Activated CD4-positive, alpha-beta memory T cell treated with anti-CD3 and anti-CD28 coated beads, Interleukin-2, amount 10 ng/mL, durations not matched to agents 7 days and 5 days (primary cell): ENCODE measurements at regions of chr11 and their contacts with region 1.

Region 1: GRCh38 chr11:62591448-62592145 is at the start of gene TUT1:
- DNase-seq: peak; percentile 98
- H3K4me3 Mint-ChIP-seq: peak within 1 kb of the TSS; percentile 99
- H3K27ac Mint-ChIP-seq: peak within 1 kb of the TSS; percentile 96
- H3K4me1 Mint-ChIP-seq: peaks cover 65% of the 10 kb centered on the region
- H3K27me3 Mint-ChIP-seq: no peaks in the 10 kb centered on the region
- total RNA-seq, gene TUT1: 23.7 to 25.2 TPM

Region 2: GRCh38 chr11:62394825-62395538 is 196.6 kb before region 1 on chr11:
- CTCF ChIA-PET with region 1: interaction called, 16 read pairs
- POLR2A ChIA-PET with region 1: interaction called, 4 read pairs
- DNase-seq: peak; percentile 56
- H3K4me3 Mint-ChIP-seq: no peak overlapping the region
- H3K27ac Mint-ChIP-seq: no peak overlapping the region
- H3K4me1 Mint-ChIP-seq: peaks cover 4% of the 10 kb centered on the region
- H3K27me3 Mint-ChIP-seq: peaks cover 15% of the 10 kb centered on the region

Region 3: GRCh38 chr11:62556108-62556871 is 35.3 kb before region 1 on chr11:
- CTCF ChIA-PET with region 1: interaction called, 16 read pairs
- POLR2A ChIA-PET with region 1: interaction called, 57 read pairs
- DNase-seq: peak; percentile 94
- H3K4me3 Mint-ChIP-seq: peak overlapping the region; percentile 74
- H3K27ac Mint-ChIP-seq: peak overlapping the region; percentile 99
- H3K4me1 Mint-ChIP-seq: peaks cover 99% of the 10 kb centered on the region
- H3K27me3 Mint-ChIP-seq: no peaks in the 10 kb centered on the region

Region 4: DNA sequence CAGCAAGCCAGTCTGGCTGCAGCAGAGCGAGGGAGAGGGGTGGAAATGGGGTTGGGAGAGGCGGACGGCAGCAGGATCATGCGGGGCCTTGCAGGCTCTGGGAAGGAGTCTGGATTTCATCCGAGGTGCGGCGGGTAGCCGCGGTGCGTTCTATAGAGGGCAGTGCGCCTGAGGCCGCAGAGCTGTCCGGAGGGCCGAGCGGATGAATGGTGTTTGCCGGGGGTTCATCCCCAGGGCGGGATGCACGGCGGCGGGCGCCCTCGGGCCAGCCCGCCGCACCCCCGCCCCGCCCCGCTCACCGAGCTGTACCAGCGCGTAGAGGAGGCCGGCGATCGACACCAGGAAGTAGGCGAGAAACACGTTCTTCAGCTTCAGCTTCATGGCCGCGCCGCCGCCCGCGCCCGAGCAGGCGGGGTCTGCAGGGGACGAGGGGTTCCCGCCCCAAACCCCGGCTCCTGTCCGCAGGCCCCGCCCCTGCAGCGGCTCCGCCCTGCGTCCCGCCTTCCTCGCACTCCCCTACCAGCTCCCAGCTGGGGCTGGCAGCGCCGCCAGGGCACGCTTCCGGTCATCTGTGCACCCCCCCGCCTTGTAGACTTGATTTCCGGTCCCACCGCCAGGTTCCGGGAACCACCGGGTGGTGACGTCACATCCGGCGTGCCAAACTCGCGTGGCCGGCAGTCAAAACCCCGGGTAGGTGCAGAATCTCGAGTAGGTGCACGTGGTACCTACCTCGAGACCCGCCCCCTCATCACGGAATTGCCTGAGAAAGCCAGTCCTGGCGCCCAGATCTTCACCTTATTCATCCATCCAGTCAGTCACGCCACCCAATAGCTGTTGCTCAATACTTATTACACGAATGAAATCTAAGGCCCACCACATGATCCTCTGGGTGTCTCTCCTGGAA is 30.2 kb after region 1 on chr11 and contains the start of gene B3GAT3:
- CTCF ChIA-PET with region 1: interaction called, 14 read pairs
- POLR2A ChIA-PET with region 1: interaction called, 70 read pairs
- DNase-seq: peak; percentile 97
- H3K4me3 Mint-ChIP-seq: peak within 1 kb of the TSS; percentile 87
- H3K27ac Mint-ChIP-seq: peak within 1 kb of the TSS; percentile 98
- H3K4me1 Mint-ChIP-seq: peaks cover 29% of the 10 kb centered on the region
- H3K27me3 Mint-ChIP-seq: no peaks in the 10 kb centered on the region
- total RNA-seq, gene B3GAT3: 58.9 to 67.1 TPM

Region 5: GRCh38 chr11:62671575-62672389 is 80.2 kb after region 1 on chr11 and contains the starts of genes LBHD1 and UQCC3:
- CTCF ChIA-PET with region 1: interaction called, 6 read pairs
- POLR2A ChIA-PET with region 1: interaction called, 30 read pairs
- DNase-seq: peak; percentile 91
- H3K4me3 Mint-ChIP-seq: peak within 1 kb of the TSS; percentile 91
- H3K27ac Mint-ChIP-seq: peak within 1 kb of the TSS; percentile 91
- H3K4me1 Mint-ChIP-seq: peaks cover 68% of the 10 kb centered on the region
- H3K27me3 Mint-ChIP-seq: no peaks in the 10 kb centered on the region
- total RNA-seq, gene LBHD1: 17.2 to 18.3 TPM
- total RNA-seq, gene UQCC3: 7.9 to 8.2 TPM

Region 6: GRCh38 chr11:62726915-62727763 is 135.5 kb after region 1 on chr11 and contains the start of gene HNRNPUL2:
- CTCF ChIA-PET with region 1: interaction called, 13 read pairs
- POLR2A ChIA-PET with region 1: interaction called, 42 read pairs
- DNase-seq: peak; percentile 99
- H3K4me3 Mint-ChIP-seq: peak within 1 kb of the TSS; percentile 87
- H3K27ac Mint-ChIP-seq: peak within 1 kb of the TSS; percentile 97
- H3K4me1 Mint-ChIP-seq: peaks cover 50% of the 10 kb centered on the region
- H3K27me3 Mint-ChIP-seq: no peaks in the 10 kb centered on the region
- total RNA-seq, gene HNRNPUL2: 65.1 to 65.3 TPM